ENCODE measurements at regions of chr11 and their contacts with region 1.

Region 1: GRCh38 chr11:65859200-65859811 is 927 bp upstream of the MUS81 start:
- DNase-seq: peak; percentile 84 to 97 (median 90)
- ATAC-seq: peak; percentile 71
- H3K4me3 ChIP-seq: peak overlapping the region; percentile 65
- H3K4me3 Mint-ChIP-seq: peak overlapping the region; percentile 92 to 100 (median 97)
- H3K27ac ChIP-seq: peak overlapping the region; percentile 88
- H3K27ac Mint-ChIP-seq: peak overlapping the region; percentile 88 to 99 (median 97)
- H3K4me1 ChIP-seq: peaks cover 39 to 41% of the 10 kb centered on the region in 2 donors
- H3K4me1 Mint-ChIP-seq: peaks cover 35 to 63% (median 50%) of the 10 kb centered on the region in 7 donors
- H3K27me3 ChIP-seq: no peaks in the 10 kb centered on the region
- H3K27me3 Mint-ChIP-seq: no peaks in the 10 kb centered on the region

Region 2: GRCh38 chr11:65540297-65541092 is 318.8 kb before region 1 on chr11:
- CTCF ChIA-PET with region 1: no interaction called
- POLR2A ChIA-PET with region 1: interaction called, 3 read pairs
- intact Hi-C with region 1: loop called in 1 of 2 experiments (anchors 10 kb)
- DNase-seq: peak; percentile 84 to 95 (median 91)
- ATAC-seq: peak; percentile 94
- H3K4me3 ChIP-seq: peak overlapping the region; percentile 71
- H3K4me3 Mint-ChIP-seq: peak overlapping the region; percentile 81 to 90 (median 84)
- H3K27ac ChIP-seq: peak overlapping the region; percentile 74
- H3K27ac Mint-ChIP-seq: peak overlapping the region in 8 of 9 donors; percentile 70 to 92 (median 86)
- H3K4me1 ChIP-seq: peaks cover 12 to 18% of the 10 kb centered on the region in 2 donors
- H3K4me1 Mint-ChIP-seq: peaks cover 13 to 32% (median 22%) of the 10 kb centered on the region in 7 donors
- H3K27me3 ChIP-seq: no peaks in the 10 kb centered on the region
- H3K27me3 Mint-ChIP-seq: no peaks in the 10 kb centered on the region

Region 3: DNA sequence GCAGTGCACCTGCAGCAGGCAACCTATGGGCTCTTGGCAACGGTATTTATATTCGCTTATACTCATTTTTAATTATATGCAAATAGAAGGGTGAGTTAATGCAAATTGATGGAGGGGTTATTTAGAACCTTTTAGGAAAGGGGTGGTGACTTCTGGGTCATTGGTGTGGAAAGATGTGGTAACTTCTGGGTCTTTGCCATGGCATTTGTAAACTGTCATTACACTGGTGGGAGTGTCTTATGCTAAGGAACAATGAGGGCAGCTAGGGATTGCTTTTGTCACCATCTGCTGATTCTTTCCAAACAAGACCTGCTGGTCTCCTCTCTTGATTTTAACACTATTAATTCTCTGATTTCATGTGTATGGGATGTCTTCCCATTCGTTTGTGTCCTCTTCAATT is 158.9 kb before region 1 on chr11:
- CTCF ChIA-PET with region 1: no interaction called
- POLR2A ChIA-PET with region 1: no interaction called
- intact Hi-C with region 1: no loop called
- DNase-seq: no peak
- ATAC-seq: no peak
- H3K4me3 ChIP-seq: no peak overlapping the region
- H3K4me3 Mint-ChIP-seq: no peak overlapping the region
- H3K27ac ChIP-seq: no peak overlapping the region
- H3K27ac Mint-ChIP-seq: peak overlapping the region in 1 of 9 donors; percentile 32
- H3K4me1 ChIP-seq: no peaks in the 10 kb centered on the region
- H3K4me1 Mint-ChIP-seq: peaks cover 0 to 5% (median 0%) of the 10 kb centered on the region in 7 donors
- H3K27me3 ChIP-seq: no peaks in the 10 kb centered on the region
- H3K27me3 Mint-ChIP-seq: peaks cover 0 to 21% (median 0%) of the 10 kb centered on the region in 5 donors

Region 4: DNA sequence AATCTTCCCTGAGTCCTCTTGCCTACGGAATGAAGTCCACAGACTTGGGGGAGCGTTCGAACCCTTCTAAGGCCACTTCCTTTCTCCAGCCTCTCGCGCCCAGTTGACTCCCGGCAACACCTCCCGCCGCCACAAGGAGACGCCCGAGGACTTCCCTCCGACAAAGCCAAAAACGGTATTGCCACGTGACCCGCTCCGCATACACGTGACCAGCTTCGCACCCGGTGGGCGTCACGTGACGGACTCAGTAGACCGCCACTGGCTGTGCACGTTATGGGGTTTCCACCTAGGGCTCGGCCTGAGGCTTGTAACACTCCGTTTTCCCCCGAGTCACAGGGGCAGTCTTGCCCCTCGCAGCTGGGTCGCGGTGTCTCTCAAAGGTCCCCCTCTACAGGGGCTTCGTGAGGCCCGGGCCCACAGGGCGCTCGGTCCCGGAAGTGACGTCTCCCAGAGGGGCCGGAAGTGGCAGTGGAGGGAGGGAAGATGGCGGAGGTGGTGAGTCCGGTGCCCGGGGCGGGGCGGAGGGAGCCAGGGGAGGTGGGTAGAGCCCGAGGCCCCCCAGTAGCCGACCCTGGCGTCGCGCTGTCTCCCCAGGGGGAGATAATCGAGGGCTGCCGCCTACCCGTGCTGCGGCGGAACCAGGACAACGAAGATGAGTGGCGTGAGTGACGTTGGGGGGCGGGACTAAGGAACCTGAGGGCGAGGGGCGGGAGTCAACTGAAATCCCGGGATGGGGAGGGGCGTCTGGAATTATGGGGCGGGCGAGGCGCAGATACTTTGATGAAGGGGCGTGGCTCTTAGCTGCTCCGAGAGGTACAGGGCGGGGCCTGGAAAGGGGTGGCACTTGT is 147.3 kb before region 1 on chr11 and contains the start of gene KAT5:
- CTCF ChIA-PET with region 1: interaction called, 11 read pairs
- POLR2A ChIA-PET with region 1: interaction called, 22 read pairs
- intact Hi-C with region 1: loop called (anchors 1 kb)
- DNase-seq: peak; percentile 95 to 99 (median 98)
- ATAC-seq: peak; percentile 87
- H3K4me3 ChIP-seq: peak within 1 kb of the TSS; percentile 100
- H3K4me3 Mint-ChIP-seq: peak within 1 kb of the TSS; percentile 91 to 99 (median 95)
- H3K27ac ChIP-seq: peak within 1 kb of the TSS; percentile 95
- H3K27ac Mint-ChIP-seq: peak within 1 kb of the TSS; percentile 93 to 100 (median 99)
- H3K4me1 ChIP-seq: peaks cover 5 to 9% of the 10 kb centered on the region in 2 donors
- H3K4me1 Mint-ChIP-seq: peaks cover 12 to 41% (median 25%) of the 10 kb centered on the region in 7 donors
- H3K27me3 ChIP-seq: no peaks in the 10 kb centered on the region
- H3K27me3 Mint-ChIP-seq: peaks cover 0 to 5% (median 0%) of the 10 kb centered on the region in 5 donors
- total RNA-seq, gene KAT5: 68.6 to 133 (median 113) TPM

Region 5: DNA sequence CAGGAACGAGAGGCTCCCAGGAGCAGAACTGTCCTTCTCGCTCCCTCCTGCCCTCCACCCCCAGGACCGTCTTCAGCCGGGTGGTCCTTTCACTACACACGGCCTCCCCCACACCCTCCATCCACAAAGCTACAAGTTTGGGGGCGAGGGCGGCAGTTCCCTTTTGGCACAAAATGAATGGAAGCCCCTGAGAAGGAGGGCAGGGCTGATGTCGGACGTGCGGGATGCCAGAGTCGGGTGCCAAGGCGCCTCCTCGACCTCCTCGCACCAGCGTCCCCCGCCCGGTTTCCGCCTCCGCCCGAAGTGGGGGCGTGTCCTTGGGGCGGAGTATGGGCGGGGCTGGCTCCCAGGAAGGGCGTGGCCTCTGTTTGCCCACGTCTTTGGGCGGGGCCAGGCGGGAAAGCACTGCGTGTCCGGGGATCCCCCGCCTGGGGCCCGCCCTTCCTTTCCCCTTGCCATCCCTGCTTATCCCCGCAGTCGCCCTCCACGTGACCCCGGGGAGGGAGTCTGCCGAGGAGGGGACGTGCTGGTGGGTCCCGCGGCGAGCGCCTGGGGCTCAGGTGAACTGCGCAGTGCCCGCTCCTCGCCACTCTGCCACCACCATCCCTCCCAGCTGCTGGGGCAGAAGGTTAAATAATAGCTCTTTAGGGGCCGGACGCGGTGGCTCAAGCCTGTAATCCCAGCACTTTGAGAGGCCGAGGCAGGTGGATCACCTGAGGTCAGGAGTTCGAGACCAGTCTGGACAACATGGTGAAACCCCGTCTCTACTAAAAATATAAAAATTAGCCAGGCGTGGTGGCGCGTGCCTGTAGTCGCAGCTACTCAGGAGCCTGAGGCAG is 14.2 kb after region 1 on chr11:
- CTCF ChIA-PET with region 1: interaction called, 30 read pairs
- POLR2A ChIA-PET with region 1: interaction called, 109 read pairs
- intact Hi-C with region 1: loop called (anchors 1 kb)
- DNase-seq: peak; percentile 93 to 100 (median 97)
- ATAC-seq: peak; percentile 99
- H3K4me3 ChIP-seq: peak overlapping the region; percentile 75
- H3K4me3 Mint-ChIP-seq: peak overlapping the region; percentile 84 to 97 (median 91)
- H3K27ac ChIP-seq: peak overlapping the region; percentile 88
- H3K27ac Mint-ChIP-seq: peak overlapping the region; percentile 71 to 92 (median 91)
- H3K4me1 ChIP-seq: peaks cover 10 to 22% of the 10 kb centered on the region in 2 donors
- H3K4me1 Mint-ChIP-seq: peaks cover 7 to 37% (median 18%) of the 10 kb centered on the region in 7 donors
- H3K27me3 ChIP-seq: no peaks in the 10 kb centered on the region
- H3K27me3 Mint-ChIP-seq: peaks cover 0 to 3% (median 0%) of the 10 kb centered on the region in 5 donors

Region 6: DNA sequence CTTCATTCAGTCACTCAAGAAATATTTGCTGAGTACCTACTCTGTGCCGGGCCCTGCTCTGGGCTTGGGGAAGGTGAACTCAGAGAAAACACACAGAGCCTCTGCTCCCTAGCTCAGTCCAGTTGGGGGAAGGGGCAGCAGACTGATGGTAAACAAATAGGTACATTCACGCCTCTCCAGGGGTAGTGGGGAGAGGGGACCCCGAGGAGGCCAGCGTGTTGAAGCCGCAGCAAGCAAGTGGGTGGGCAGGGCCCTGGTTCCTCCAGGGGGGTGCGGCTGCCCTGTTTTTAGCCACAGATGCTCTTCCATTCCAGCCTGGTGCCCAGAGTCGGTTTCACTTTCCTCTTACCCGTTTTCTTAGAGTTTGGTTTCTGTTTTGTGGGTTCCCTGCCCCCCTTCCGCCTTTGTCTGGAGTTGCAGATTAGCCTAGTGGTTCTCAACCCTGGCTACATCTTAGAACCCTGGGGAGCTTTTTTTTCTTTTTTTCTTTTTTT is 68.6 kb after region 1 on chr11:
- CTCF ChIA-PET with region 1: no interaction called
- POLR2A ChIA-PET with region 1: interaction called, 6 read pairs
- intact Hi-C with region 1: loop called in 1 of 2 experiments (anchors 2 kb)
- DNase-seq: peak in 8 of 9 donors; percentile 64 to 86 (median 80)
- ATAC-seq: peak; percentile 96
- H3K4me3 ChIP-seq: peak overlapping the region; percentile 78
- H3K4me3 Mint-ChIP-seq: peak overlapping the region; percentile 74 to 89 (median 81)
- H3K27ac ChIP-seq: peak overlapping the region; percentile 81
- H3K27ac Mint-ChIP-seq: peak overlapping the region; percentile 92 to 98 (median 96)
- H3K4me1 ChIP-seq: peaks cover 20 to 30% of the 10 kb centered on the region in 2 donors
- H3K4me1 Mint-ChIP-seq: peaks cover 31 to 47% (median 36%) of the 10 kb centered on the region in 7 donors
- H3K27me3 ChIP-seq: no peaks in the 10 kb centered on the region
- H3K27me3 Mint-ChIP-seq: no peaks in the 10 kb centered on the region

Region 7: GRCh38 chr11:66017321-66017720 is 158.0 kb after region 1 on chr11:
- CTCF ChIA-PET with region 1: no interaction called
- POLR2A ChIA-PET with region 1: no interaction called
- intact Hi-C with region 1: no loop called
- DNase-seq: no peak
- ATAC-seq: no peak
- H3K4me3 ChIP-seq: no peak overlapping the region
- H3K4me3 Mint-ChIP-seq: no peak overlapping the region
- H3K27ac ChIP-seq: no peak overlapping the region
- H3K27ac Mint-ChIP-seq: no peak overlapping the region
- H3K4me1 ChIP-seq: peaks cover 0 to under 1% of the 10 kb centered on the region in 2 donors
- H3K4me1 Mint-ChIP-seq: peaks cover 0 to 13% (median 0%) of the 10 kb centered on the region in 7 donors
- H3K27me3 ChIP-seq: peaks cover 0 to 13% of the 10 kb centered on the region in 2 donors
- H3K27me3 Mint-ChIP-seq: peaks cover 0 to 13% (median 6%) of the 10 kb centered on the region in 5 donors

Region 8: GRCh38 chr11:66258473-66258893 is 399.2 kb after region 1 on chr11:
- CTCF ChIA-PET with region 1: no interaction called
- POLR2A ChIA-PET with region 1: no interaction called
- intact Hi-C with region 1: loop called in 1 of 2 experiments (anchors 2 kb)
- DNase-seq: no peak
- ATAC-seq: no peak
- H3K4me3 ChIP-seq: peak overlapping the region; percentile 80
- H3K4me3 Mint-ChIP-seq: peak overlapping the region; percentile 65 to 97 (median 94)
- H3K27ac ChIP-seq: peak overlapping the region; percentile 98
- H3K27ac Mint-ChIP-seq: peak overlapping the region; percentile 34 to 98 (median 81)
- H3K4me1 ChIP-seq: peaks cover 18 to 20% of the 10 kb centered on the region in 2 donors
- H3K4me1 Mint-ChIP-seq: peaks cover 21 to 33% (median 30%) of the 10 kb centered on the region in 7 donors
- H3K27me3 ChIP-seq: no peaks in the 10 kb centered on the region
- H3K27me3 Mint-ChIP-seq: no peaks in the 10 kb centered on the region